ENCODE measurements at regions of chr9 and their contacts with region 1.

Region 1: DNA sequence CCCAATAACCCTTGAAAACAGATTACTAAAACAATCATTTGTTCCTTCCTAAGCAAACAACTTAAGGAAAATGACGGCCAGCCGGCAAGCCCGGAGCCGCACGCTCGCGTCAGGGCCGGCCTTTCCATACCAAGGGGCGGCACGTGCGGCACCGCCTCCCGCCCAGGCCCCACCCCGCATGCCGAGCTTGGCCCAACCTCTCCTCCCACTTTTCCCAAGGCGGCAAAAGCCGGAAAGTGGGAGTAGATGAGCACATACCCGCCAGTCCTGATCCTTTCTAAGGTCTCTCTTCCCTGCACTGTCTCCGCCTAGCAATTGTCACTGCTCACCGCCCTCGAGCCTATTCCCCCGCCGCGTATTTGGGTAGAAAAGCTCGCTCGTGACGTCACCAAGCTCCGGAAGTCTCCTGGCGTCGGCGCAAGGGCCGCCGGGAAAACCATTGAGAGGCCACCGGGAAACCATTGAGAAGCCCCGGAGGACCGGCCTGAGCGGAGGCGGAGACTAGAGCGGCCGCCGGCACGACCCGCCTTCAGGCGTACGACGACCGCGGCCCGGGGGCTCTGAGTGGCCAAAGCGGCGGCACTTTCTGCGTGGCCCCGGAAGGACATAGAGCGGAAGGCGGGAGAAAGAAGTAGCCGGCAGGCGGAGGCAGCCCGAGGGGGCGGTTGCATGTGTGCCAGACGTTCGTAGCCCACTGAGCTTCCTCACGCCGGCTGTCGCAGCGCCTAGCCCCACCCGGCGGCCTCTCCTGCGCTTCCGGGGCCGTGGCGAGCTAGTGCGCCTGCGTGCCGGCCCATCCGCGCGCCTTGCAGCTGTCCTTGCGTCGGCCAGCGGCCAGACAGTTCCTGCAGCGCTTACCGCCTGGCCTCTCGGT is at the starts of genes NCBP1 and TSTD2:
- DNase-seq: peak; percentile 98
- H3K4me3 Mint-ChIP-seq: peak within 1 kb of the TSS; percentile 83
- H3K27ac Mint-ChIP-seq: peak within 1 kb of the TSS; percentile 99
- H3K4me1 Mint-ChIP-seq: peaks cover 34% of the 10 kb centered on the region
- H3K27me3 Mint-ChIP-seq: no peaks in the 10 kb centered on the region
- CTCF ChIP-seq: no peak
- total RNA-seq, gene NCBP1: 35.6 and 38.7 TPM in 2 replicates
- total RNA-seq, gene TSTD2: 18.0 and 19.0 TPM in 2 replicates

Region 2: GRCh38 chr9:97237951-97238851 is 395.0 kb before region 1 on chr9:
- CTCF ChIA-PET with region 1: no interaction called
- POLR2A ChIA-PET with region 1: interaction called, 16 read pairs
- intact Hi-C with region 1: no loop called
- DNase-seq: peak; percentile 84
- H3K4me3 Mint-ChIP-seq: peak overlapping the region; percentile 92
- H3K27ac Mint-ChIP-seq: peak overlapping the region; percentile 91
- H3K4me1 Mint-ChIP-seq: peaks cover 12% of the 10 kb centered on the region
- H3K27me3 Mint-ChIP-seq: no peaks in the 10 kb centered on the region
- CTCF ChIP-seq: no peak

Region 3: GRCh38 chr9:97571664-97572063 is 61.6 kb before region 1 on chr9:
- CTCF ChIA-PET with region 1: no interaction called
- POLR2A ChIA-PET with region 1: no interaction called
- intact Hi-C with region 1: no loop called
- DNase-seq: no peak
- H3K4me3 Mint-ChIP-seq: no peak overlapping the region
- H3K27ac Mint-ChIP-seq: no peak overlapping the region
- H3K4me1 Mint-ChIP-seq: no peaks in the 10 kb centered on the region
- H3K27me3 Mint-ChIP-seq: peaks cover 29% of the 10 kb centered on the region
- CTCF ChIP-seq: no peak

Region 4: GRCh38 chr9:97645720-97646119 is 12.5 kb after region 1 on chr9:
- CTCF ChIA-PET with region 1: no interaction called
- POLR2A ChIA-PET with region 1: interaction called, 27 read pairs
- intact Hi-C with region 1: no loop called
- DNase-seq: no peak
- H3K4me3 Mint-ChIP-seq: no peak overlapping the region
- H3K27ac Mint-ChIP-seq: no peak overlapping the region
- H3K4me1 Mint-ChIP-seq: peaks cover 6% of the 10 kb centered on the region
- H3K27me3 Mint-ChIP-seq: no peaks in the 10 kb centered on the region
- CTCF ChIP-seq: no peak

Region 5: DNA sequence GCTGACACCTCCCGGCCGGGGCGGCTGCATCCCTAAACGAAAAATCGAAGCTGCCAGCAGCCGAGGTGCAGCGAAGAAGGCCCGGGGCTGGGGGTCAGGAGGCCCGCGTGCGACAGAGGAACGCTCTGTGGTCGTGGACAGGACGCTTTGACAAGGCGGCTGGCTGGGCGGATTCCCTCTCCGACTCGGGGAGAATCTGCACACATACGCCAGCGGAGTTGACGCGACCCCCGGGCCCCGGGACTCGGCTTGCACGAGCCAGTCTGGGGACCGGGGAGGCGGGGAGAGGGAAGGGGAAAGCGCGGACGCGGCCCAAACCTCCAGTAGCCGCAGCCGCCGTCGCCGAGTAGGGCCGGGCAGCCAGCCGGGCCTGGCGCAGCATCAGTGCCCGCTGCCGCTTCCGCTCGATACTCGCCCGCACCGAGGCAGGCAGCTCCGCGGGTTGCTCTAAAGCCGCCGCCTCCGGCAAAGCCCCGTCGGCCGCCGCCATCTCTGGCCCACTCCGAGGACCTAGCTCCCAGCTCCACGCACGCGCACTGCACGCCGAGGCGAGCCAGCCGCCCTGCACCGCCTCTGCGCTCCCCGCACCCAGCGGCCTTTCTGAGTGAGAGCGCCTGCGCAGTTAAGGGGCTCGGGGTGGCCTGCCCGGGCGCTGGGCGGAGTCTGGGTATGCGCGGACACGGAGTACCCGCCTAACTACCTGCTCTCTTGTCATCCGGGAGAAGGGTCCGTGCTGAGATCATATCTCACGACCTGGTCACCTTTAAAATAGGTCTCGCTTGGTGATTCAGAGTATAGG is 63.8 kb after region 1 on chr9 and contains the start of gene XPA:
- CTCF ChIA-PET with region 1: no interaction called
- POLR2A ChIA-PET with region 1: interaction called, 47 read pairs
- intact Hi-C with region 1: no loop called
- DNase-seq: peak; percentile 96
- H3K4me3 Mint-ChIP-seq: peak within 1 kb of the TSS; percentile 86
- H3K27ac Mint-ChIP-seq: peak within 1 kb of the TSS; percentile 80
- H3K4me1 Mint-ChIP-seq: peaks cover 38% of the 10 kb centered on the region
- H3K27me3 Mint-ChIP-seq: no peaks in the 10 kb centered on the region
- CTCF ChIP-seq: no peak
- total RNA-seq, gene XPA: 11.8 and 12.3 TPM in 2 replicates

Region 6: GRCh38 chr9:97982683-97983588 is 349.7 kb after region 1 on chr9 and contains the start of gene ANP32B:
- CTCF ChIA-PET with region 1: no interaction called
- POLR2A ChIA-PET with region 1: interaction called, 11 read pairs
- intact Hi-C with region 1: no loop called
- DNase-seq: peak; percentile 91
- H3K4me3 Mint-ChIP-seq: peak within 1 kb of the TSS; percentile 79
- H3K27ac Mint-ChIP-seq: peak within 1 kb of the TSS; percentile 63
- H3K4me1 Mint-ChIP-seq: peaks cover 31% of the 10 kb centered on the region
- H3K27me3 Mint-ChIP-seq: no peaks in the 10 kb centered on the region
- CTCF ChIP-seq: peak; percentile 83
- total RNA-seq, gene ANP32B: 218 and 245 TPM in 2 replicates

Region 7: DNA sequence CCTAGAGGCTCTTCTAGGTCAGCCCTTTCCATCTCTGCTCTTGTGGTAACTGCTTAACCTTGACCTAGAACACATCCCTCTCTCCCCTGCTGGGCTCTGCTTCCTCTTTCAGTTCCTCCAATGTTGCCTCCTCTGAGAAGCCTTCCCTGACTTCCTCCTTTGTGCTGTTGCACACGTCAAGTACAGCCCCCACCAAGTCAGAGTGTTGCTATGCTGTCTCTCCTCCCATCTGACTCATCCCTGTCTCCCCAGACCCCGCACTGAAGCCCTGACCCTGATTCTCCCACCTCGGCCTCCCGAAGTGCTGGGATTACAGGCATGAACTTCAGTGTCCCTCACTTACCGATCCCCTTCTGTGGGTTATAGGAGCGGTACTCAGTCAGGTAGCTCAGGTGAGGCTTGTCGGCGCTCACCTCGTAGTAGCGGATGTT is 496.2 kb after region 1 on chr9:
- CTCF ChIA-PET with region 1: no interaction called
- POLR2A ChIA-PET with region 1: no interaction called
- intact Hi-C with region 1: no loop called
- DNase-seq: no peak
- H3K4me3 Mint-ChIP-seq: no peak overlapping the region
- H3K27ac Mint-ChIP-seq: no peak overlapping the region
- H3K4me1 Mint-ChIP-seq: no peaks in the 10 kb centered on the region
- H3K27me3 Mint-ChIP-seq: no peaks in the 10 kb centered on the region
- CTCF ChIP-seq: no peak